Activated T-helper 1 cell treated with anti-CD3 and anti-CD28 coated beads, Interleukin-12 subunit alpha, Interleukin-12 subunit beta, Interleukin-2, Interleukin-4 antibody, amounts not matched to agents 30 ng/mL and 10 ng/mL and 1 ng/mL, durations not matched to agents 14 hours and 24 hours and 36 hours (primary cell): ENCODE measurements at regions of chr4 and their contacts with region 1.

Region 1: DNA sequence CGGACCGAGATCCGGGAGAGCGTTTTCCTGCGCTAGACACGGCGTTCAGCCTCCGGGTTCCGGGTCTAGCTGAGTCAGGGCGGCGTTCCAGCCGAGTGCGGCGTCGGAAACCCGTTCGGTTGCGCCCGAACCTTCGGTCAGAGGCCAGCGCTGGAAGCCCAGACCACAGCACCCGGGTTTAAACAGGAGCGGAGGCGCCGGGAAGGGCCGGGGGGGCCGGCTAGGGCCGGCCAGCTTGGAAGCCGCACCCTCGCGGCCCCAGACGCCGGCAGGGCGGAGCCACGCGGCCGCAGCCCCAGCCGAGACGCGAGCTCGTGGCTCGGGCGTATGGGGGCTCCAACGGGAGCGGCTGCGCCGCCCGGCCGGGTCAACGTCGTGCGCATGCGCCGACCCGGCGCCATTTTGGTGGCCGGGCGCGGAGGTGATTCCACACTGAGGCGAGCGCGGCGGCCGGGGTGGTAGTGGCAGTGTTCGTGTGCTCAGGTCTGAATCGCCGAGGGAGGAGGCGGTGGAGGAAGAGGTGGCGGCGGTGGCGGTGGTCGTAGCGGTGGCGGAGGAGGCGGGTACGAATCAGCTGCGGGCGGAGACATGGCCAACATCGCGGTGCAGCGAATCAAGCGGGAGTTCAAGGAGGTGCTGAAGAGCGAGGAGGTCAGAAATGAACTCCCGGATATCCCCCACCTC is at the start of gene UBE2K:
- DNase-seq: peak; percentile 91
- H3K4me3 Mint-ChIP-seq: peak within 1 kb of the TSS; percentile 97
- H3K27ac Mint-ChIP-seq: peak within 1 kb of the TSS; percentile 97
- H3K4me1 Mint-ChIP-seq: peaks cover 37% of the 10 kb centered on the region
- H3K27me3 Mint-ChIP-seq: no peaks in the 10 kb centered on the region
- total RNA-seq, gene UBE2K: 92.2 and 96.4 TPM in 2 replicates

Region 2: DNA sequence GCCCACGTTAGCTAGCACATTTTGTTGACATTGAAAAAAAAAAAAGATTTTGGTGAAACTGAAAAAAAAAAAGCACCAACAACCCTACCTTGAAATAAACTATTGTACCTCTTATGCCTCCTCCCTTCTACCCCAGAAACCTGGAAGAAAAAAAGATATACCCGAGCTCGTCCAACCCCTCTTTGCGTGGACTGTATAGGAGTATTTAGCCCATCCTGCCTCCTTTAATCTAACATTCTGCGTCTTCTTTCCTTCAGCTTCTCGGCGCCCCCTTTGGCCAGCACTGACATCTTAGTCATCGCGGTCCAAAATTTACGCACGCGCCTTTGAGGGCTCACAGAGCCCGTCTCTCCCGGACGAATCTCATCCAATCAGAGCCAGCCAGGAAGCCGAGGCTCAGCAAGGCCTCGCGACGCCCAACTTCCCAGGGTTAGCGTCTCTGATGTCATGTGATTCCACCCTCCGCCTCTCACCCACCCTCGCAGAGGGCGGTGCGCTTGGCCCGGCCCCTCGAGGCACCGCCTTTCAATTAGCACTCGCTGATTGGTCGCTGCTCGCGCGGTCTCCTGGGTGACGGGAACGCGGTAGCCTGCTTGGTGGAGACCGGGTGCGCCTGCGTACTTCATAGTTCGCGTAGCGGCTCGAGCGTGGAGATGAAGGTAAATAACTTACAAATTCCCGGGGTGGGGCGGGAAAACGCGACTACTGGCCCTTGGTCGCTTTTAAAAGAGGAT is 515.8 kb before region 1 on chr4 and contains the start of gene WDR19:
- intact Hi-C with region 1: loop called (anchors 1 kb)
- DNase-seq: peak; percentile 98
- H3K4me3 Mint-ChIP-seq: no peak within 1 kb of the TSS
- H3K27ac Mint-ChIP-seq: no peak within 1 kb of the TSS
- H3K4me1 Mint-ChIP-seq: no peaks in the 10 kb centered on the region
- H3K27me3 Mint-ChIP-seq: peaks cover 15% of the 10 kb centered on the region
- total RNA-seq, gene WDR19: 12.6 and 13.7 TPM in 2 replicates

Region 3: GRCh38 chr4:39587881-39588280 is 110.0 kb before region 1 on chr4:
- intact Hi-C with region 1: no loop called
- DNase-seq: no peak
- H3K4me3 Mint-ChIP-seq: no peak overlapping the region
- H3K27ac Mint-ChIP-seq: no peak overlapping the region
- H3K4me1 Mint-ChIP-seq: no peaks in the 10 kb centered on the region
- H3K27me3 Mint-ChIP-seq: no peaks in the 10 kb centered on the region

Region 4: DNA sequence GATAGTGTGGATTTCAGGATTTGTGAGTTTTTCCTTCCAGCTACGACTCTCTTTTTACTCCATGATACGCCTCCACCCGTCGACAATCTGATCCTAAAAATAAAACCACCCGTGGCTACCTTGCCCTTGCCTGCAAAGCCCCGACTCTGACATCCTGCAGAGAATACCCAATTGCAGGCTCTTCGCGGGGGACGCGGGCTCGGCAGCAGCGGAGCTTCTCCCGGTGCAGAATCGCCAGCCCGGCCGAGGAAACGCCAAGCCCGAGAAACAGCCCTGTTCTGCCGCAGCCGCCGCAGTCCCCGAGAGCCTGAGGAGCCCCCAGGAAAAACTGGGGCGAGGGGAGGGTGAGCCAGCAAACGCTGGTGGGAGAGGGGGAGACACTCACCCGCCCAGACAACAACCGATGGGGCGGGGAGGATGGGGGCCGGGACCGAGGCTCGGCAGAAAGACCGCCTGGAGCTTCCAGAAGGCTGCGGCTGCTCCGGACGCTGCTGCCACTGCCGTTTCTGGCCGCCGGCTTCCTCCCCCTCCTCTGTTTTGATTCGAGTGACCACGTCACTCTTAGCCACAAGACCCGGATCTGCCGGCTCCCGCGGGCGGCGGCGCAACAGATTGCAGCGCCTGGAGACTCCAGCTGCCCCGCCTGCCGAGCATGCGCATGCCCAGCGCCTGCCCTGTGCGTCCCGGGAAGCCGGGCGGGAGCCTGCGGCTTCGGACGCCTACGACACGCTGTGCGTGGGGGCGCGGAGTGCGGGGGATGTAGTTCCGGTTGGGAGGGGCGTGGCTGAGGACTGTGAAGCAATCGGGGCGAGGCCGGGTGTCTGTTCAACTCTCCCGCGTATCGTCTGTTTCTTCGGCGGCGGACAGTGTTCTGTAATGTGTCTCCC is 59.3 kb before region 1 on chr4 and contains the start of gene SMIM14:
- intact Hi-C with region 1: loop called (anchors 2 kb)
- DNase-seq: peak; percentile 89
- H3K4me3 Mint-ChIP-seq: peak within 1 kb of the TSS; percentile 87
- H3K27ac Mint-ChIP-seq: peak within 1 kb of the TSS; percentile 83
- H3K4me1 Mint-ChIP-seq: peaks cover 22% of the 10 kb centered on the region
- H3K27me3 Mint-ChIP-seq: peaks cover 24% of the 10 kb centered on the region
- total RNA-seq, gene SMIM14: 0.76 and 1.6 TPM in 2 replicates

Region 5: DNA sequence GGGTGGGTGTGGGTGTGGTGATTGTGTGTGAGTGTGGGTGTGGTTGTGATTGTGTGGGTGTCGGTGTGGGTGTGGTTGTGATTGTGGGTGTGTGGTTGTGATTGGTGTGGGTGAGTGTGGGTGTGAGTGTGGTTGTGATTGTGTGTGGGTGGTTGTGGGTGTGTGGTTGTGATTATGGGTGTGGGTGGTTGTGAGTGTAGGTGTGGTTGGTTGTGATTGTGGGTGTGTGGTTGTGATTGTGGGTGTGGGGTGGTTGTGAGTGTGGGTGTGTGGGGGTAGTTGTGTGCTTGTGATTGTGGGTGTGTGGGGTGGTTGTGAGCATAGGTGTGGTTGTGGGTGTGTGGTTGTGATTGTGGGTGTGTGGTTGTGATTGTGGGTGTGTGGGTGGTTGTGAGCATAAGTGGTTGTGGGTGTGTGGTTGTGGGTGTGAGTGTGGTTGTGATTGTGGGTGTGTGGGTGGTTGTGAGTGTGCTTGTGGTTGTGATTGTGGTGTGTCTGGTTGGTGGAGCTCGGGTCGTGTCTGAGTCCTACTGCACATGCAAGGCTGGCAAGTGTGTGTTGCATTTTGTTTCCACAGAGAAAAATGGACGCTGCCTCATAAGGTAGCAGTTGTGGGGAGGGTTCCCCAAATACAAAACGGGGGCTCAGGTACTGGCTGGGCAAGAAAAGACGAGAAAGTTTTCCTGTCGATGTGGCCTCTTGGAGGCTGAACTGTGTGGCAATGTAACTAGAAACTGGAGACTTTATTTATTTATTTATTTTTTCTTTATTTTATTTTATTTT is 116.7 kb after region 1 on chr4:
- intact Hi-C with region 1: loop called (anchors 5 kb)
- DNase-seq: no peak
- H3K4me3 Mint-ChIP-seq: peak overlapping the region; percentile 11
- H3K27ac Mint-ChIP-seq: peak overlapping the region; percentile 85
- H3K4me1 Mint-ChIP-seq: no peaks in the 10 kb centered on the region
- H3K27me3 Mint-ChIP-seq: peaks cover 7% of the 10 kb centered on the region

Region 6: GRCh38 chr4:40046311-40046980 is 348.6 kb after region 1 on chr4:
- intact Hi-C with region 1: loop called (anchors 1 kb)
- DNase-seq: peak; percentile 8
- H3K4me3 Mint-ChIP-seq: peak overlapping the region; percentile 24
- H3K27ac Mint-ChIP-seq: peak overlapping the region; percentile 94
- H3K4me1 Mint-ChIP-seq: peaks cover 23% of the 10 kb centered on the region
- H3K27me3 Mint-ChIP-seq: no peaks in the 10 kb centered on the region